Left ventricle myocardium superior (tissue), 1 donor: ENCODE measurements at regions of chr5 and their contacts with region 1.

Region 1: DNA sequence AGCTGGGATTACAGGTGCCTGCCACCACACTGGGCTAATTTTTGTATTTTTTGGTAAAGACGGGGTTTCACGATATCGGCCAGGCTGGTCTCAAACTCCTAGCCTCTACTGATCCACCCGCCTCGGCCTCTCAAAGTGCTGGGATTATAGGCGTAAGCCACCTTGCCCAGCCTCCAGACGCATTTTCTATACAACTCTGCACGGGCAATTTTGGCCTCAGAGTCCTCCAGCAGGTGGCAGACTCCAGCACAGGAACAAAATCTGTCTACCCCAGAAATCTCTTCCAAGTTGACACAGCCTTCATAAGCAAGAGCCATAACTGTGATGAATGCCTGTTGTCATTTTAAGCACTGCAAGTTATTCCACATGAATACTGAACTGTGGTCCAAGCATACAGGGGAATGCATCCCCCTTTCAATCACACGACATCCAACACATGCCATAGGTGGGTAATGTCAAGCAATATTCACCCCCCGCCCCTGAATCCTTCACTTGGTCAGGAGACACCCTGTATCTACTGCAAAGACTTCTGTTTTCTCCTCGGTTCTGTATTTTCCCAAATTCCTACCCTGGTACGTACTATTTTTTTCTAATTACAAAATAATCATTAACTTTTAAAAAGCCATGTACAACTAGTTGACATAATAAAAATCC is 50.8 kb downstream of the ALDH7A1 start:
- DNase-seq: no peak
- ATAC-seq: no peak

Region 2: DNA sequence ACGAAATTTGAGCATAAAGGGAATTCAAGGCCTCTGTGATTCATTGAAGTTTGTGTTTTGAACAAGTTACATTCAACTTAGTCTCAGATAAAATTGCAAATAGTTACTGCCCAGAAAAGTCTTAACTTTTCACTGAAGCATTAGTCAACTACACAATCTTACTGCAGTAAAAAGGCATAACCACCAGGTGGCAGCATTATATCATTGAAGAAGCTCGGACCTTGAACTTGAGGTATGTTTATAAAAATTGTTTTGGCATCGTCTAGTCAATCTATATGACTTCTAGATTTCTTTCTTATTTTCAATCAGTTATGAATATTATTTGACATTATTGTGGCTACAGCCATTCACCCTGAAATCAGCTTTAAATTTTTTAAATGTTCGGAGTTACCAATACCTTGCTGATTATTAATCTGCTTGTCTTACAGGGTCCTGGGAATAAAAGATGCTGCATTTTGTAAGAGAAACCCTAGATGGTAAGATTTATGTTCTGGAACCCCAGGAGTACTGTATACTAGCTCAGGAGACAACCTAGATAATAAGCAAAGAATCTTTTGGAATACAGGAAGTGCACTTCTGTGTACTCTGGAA is 204.9 kb before region 1 on chr5:
- intact Hi-C with region 1: loop called (anchors 5 kb)
- DNase-seq: no peak
- ATAC-seq: peak; percentile 31

Region 3: GRCh38 chr5:126384985-126385384 is 159.2 kb before region 1 on chr5:
- intact Hi-C with region 1: no loop called
- DNase-seq: no peak
- ATAC-seq: peak; percentile 82

Region 4: GRCh38 chr5:126745259-126745992 is 201.2 kb after region 1 on chr5:
- intact Hi-C with region 1: no loop called
- DNase-seq: no peak
- ATAC-seq: no peak

Region 5: GRCh38 chr5:126897851-126898622 is 353.8 kb after region 1 on chr5:
- intact Hi-C with region 1: no loop called
- DNase-seq: no peak
- ATAC-seq: no peak